WTC11 (cell line): ENCODE measurements at regions of chr16 and their contacts with region 1.

Region 1: DNA sequence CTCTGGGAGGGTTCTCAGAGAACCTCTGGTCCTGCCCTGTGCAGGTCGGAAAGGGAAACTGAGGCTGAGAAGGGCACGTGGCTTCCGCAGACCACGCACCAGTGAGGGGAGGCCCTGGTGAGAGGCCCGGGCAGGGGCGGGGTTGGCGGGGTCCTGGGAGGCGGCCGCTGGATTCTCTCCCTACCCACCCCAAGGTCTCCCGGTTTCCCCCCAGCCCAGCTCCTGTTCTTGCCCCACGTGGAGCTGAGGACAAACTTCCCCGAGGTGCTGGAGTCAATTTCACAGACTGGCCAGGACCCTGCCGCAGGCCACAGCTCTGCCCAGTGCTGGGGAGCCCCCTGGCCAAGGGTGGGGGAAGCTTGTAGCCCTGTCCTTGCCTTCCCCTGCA is 11.5 kb downstream of the CCL17 start:
- DNase-seq: no peak
- ATAC-seq: no peak
- H3K4me3 Mint-ChIP-seq: 0 out of 2 replicates have a peak overlapping the region, but pooled peaks have one; percentile 67
- H3K27ac Mint-ChIP-seq: no peak overlapping the region
- H3K4me1 Mint-ChIP-seq: peaks cover 27% of the 10 kb centered on the region
- H3K27me3 Mint-ChIP-seq: no peaks in the 10 kb centered on the region
- CTCF ChIP-seq: no peak

Region 2: GRCh38 chr16:57279780-57280638 is 136.1 kb before region 1 on chr16:
- CTCF ChIA-PET with region 1: interaction called, 17 read pairs
- POLR2A ChIA-PET with region 1: no interaction called
- DNase-seq: no peak
- ATAC-seq: no peak
- H3K4me3 Mint-ChIP-seq: no peak overlapping the region
- H3K27ac Mint-ChIP-seq: no peak overlapping the region
- H3K4me1 Mint-ChIP-seq: peaks cover 21% of the 10 kb centered on the region
- H3K27me3 Mint-ChIP-seq: peaks cover 32% of the 10 kb centered on the region
- CTCF ChIP-seq: no peak

Region 3: GRCh38 chr16:57314161-57314785 is 101.8 kb before region 1 on chr16:
- CTCF ChIA-PET with region 1: interaction called, 17 read pairs
- POLR2A ChIA-PET with region 1: no interaction called
- DNase-seq: no peak
- ATAC-seq: no peak
- H3K4me3 Mint-ChIP-seq: no peak overlapping the region
- H3K27ac Mint-ChIP-seq: no peak overlapping the region
- H3K4me1 Mint-ChIP-seq: peaks cover 23% of the 10 kb centered on the region
- H3K27me3 Mint-ChIP-seq: no peaks in the 10 kb centered on the region; the same call in 1 of the 2 replicates
- CTCF ChIP-seq: no peak

Region 4: DNA sequence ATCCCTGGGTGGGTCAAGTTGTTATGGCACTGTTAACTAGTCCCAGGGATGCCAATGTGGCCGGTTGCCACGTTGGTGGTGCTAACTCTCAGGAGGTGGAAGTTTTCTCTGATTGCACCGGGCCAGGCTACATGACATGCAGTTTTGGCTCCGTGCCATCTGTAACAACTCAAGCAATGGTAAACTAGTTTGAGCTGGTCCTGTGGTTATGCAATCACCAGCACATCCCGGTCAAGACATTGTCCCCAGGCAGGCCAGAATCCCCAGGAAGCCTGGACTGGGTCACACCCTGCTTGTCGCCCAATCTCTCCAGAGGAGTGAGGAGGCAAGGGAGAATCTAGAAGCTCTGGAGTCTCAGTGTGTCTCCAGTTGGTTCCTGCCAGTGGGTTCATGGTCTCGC is 21.7 kb before region 1 on chr16:
- CTCF ChIA-PET with region 1: interaction called, 27 read pairs
- POLR2A ChIA-PET with region 1: no interaction called
- DNase-seq: no peak
- ATAC-seq: no peak
- H3K4me3 Mint-ChIP-seq: no peak overlapping the region
- H3K27ac Mint-ChIP-seq: no peak overlapping the region
- H3K4me1 Mint-ChIP-seq: no peaks in the 10 kb centered on the region
- H3K27me3 Mint-ChIP-seq: peaks cover 8% of the 10 kb centered on the region
- CTCF ChIP-seq: no peak

Region 5: DNA sequence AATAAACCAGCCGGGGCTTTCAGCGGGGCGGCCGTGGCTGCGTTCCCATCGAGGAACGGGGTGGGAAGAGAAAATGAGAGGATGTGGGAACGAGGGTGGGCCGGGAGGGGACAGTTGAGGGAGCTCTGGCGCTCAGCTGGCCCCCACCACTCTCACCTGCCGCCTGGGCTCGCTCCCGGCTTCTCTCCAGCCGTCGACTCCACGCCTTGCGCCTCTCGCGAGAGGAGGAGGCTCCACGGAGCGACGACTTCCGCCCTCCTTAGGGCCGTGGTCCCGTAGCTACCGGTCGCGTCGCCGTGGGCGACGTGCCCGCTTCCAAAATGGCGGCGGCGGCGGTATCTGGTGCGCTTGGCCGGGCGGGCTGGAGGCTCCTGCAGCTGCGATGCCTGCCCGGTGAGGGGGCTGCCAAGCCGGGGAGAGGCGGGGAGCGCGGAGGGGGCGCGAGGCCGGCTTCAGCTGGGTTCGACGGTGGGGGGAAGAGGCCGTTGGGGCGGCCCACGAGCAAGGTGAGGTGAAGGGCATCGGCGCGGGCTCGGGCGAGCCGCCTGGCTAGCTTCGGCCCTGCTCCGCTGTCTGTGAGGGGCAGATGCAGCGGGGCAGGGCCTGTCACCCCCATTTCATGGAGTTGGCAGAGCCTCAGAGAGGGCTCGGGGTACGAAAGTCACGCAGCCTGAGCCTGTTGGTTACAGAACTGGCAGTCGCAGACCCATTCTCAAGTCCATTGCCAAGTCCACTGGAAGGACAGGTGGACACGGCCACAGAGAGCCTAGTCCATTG is 31.3 kb after region 1 on chr16 and contains the starts of genes CIAPIN1 and COQ9:
- CTCF ChIA-PET with region 1: interaction called, 32 read pairs
- POLR2A ChIA-PET with region 1: no interaction called
- DNase-seq: peak; percentile 92
- ATAC-seq: peak; percentile 99
- H3K4me3 Mint-ChIP-seq: peak within 1 kb of the TSS; percentile 91
- H3K27ac Mint-ChIP-seq: peak within 1 kb of the TSS; percentile 32
- H3K4me1 Mint-ChIP-seq: peaks cover 13% of the 10 kb centered on the region
- H3K27me3 Mint-ChIP-seq: no peaks in the 10 kb centered on the region
- CTCF ChIP-seq: no peak
- total RNA-seq, gene CIAPIN1: 85.9 to 94.7 TPM (median 87.9 TPM) in 3 replicates
- total RNA-seq, gene COQ9: 39.2 to 40.2 TPM (median 39.8 TPM) in 3 replicates

Region 6: GRCh38 chr16:57475711-57476339 is 59.7 kb after region 1 on chr16:
- CTCF ChIA-PET with region 1: interaction called, 12 read pairs
- POLR2A ChIA-PET with region 1: no interaction called
- DNase-seq: peak; percentile 95
- ATAC-seq: peak; percentile 81
- H3K4me3 Mint-ChIP-seq: peak overlapping the region; percentile 43; the same call in 1 of the 2 replicates
- H3K27ac Mint-ChIP-seq: peak overlapping the region; percentile 27; the same call in 1 of the 2 replicates
- H3K4me1 Mint-ChIP-seq: peaks cover 75% of the 10 kb centered on the region
- H3K27me3 Mint-ChIP-seq: peaks cover 6% of the 10 kb centered on the region
- CTCF ChIP-seq: peak; percentile 72

Region 7: DNA sequence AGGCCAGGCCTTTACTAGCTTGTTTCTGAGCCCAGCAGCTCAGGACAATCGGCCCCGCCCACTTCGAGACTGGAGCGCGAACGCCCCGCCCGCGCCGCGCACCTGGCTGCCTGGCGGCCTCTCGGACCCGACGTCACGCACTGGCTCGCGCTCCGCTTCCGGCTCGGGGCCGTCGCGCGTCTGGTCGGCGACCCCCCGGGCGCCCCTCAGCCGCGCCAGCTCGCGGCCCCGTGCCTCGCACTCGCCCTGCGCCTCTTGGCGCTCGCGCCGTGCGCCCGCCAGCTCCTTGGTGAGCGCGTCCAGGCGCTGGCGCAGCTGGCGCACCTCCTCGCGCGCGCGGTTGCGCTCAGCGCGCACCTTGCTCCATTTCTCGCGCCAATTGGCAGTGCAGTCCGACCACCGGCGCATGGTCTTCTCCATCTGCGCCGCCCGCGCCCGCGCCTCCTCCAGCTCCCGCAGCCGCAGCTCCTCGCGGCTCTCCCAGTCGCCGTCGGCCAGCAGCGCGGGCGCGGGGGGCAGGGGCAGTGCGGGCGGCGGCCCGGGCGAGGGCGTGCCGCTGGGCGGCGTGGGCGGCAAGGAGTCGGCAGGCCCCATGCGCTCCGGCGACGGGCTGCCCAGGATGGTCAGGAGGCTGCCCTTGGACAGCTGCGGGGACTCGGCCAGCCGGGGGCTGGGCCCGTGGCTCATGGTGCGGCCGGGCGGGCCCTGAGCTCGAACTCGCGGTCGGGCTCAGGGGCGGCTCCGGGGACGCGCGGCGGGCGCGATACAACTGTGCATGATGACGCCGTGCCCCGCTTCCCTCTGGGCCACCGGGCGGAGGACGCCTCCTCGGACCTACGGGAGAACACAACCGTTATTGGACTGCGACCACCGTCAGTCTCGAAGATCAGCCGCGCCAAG is 112.6 kb after region 1 on chr16:
- CTCF ChIA-PET with region 1: interaction called, 38 read pairs
- POLR2A ChIA-PET with region 1: no interaction called
- DNase-seq: peak; percentile 91
- ATAC-seq: peak; percentile 61
- H3K4me3 Mint-ChIP-seq: peak overlapping the region; percentile 71
- H3K27ac Mint-ChIP-seq: peak overlapping the region; percentile 77; the same call in 1 of the 2 replicates
- H3K4me1 Mint-ChIP-seq: peaks cover 55% of the 10 kb centered on the region
- H3K27me3 Mint-ChIP-seq: peaks cover 24% of the 10 kb centered on the region
- CTCF ChIP-seq: no peak